ENCODE measurements at regions of chr3 and their contacts with region 1.

Region 1: DNA sequence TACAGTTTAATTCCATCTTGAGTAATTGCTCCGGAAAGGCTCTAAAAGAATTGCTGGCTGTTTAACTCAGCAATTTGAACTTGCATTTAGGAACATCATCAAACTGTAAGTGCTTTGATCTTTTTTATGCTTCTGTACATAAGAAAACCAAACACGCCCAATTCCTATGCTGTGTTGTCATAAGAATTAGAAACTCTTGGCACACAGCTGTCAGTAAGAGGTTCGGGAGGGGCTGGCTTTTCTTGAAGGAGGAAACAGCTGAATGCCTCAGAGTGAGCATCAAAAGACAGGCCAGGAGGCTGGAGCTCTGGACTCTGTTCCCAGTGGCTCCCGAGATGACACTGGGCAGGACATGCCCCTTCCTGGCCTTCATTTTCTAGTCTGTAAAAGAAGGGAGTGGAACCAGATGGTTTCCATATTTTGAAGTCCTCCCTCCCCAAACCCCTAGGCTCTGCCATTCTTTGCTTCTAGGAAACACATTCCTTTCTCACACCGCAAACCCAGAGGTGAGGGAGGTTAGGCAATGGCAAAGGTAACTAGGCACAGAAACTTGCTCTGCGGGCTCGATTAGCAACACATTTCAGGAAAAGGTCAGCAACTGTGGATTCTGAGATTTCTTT is 73.7 kb upstream of the DLG1 start:
- DNase-seq: peak; percentile 90 to 93
- H3K4me3 ChIP-seq: no peak overlapping the region
- H3K4me3 Mint-ChIP-seq: peak overlapping the region; percentile 7
- H3K27ac Mint-ChIP-seq: peak overlapping the region; percentile 90
- H3K4me1 ChIP-seq: peaks cover 57% of the 10 kb centered on the region
- H3K4me1 Mint-ChIP-seq: peaks cover 32% of the 10 kb centered on the region
- H3K27me3 ChIP-seq: no peaks in the 10 kb centered on the region
- H3K27me3 Mint-ChIP-seq: no peaks in the 10 kb centered on the region
- CTCF ChIP-seq: no peak

Region 2: DNA sequence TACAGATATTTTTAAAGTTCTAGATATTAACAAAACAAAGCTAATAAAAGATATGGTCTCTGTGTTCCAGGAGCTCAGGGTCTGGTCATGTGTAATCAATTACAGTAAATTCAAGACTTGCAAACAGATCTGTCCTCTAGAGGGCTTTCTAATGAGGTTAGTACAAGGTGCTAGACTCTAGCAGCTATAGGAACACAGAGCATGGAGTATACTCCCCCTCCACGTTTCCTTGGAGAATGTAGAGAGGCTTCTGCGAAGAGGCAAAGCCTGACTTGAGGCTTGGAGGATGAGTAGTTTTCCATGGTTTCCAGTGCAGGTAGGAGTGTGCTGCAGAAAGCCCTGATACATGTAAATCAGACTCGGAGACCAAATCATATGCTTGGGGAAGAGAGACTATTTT is 41.0 kb before region 1 on chr3:
- CTCF ChIA-PET with region 1: no interaction called
- POLR2A ChIA-PET with region 1: no interaction called
- intact Hi-C with region 1: loop called (anchors 5 kb)
- DNase-seq: no peak
- H3K4me3 ChIP-seq: no peak overlapping the region
- H3K4me3 Mint-ChIP-seq: no peak overlapping the region
- H3K27ac Mint-ChIP-seq: peak overlapping the region; percentile 5
- H3K4me1 ChIP-seq: peaks cover 23% of the 10 kb centered on the region
- H3K4me1 Mint-ChIP-seq: peaks cover 27% of the 10 kb centered on the region
- H3K27me3 ChIP-seq: no peaks in the 10 kb centered on the region
- H3K27me3 Mint-ChIP-seq: no peaks in the 10 kb centered on the region
- CTCF ChIP-seq: peak in 1 of 2 experiments; percentile 36

Region 3: DNA sequence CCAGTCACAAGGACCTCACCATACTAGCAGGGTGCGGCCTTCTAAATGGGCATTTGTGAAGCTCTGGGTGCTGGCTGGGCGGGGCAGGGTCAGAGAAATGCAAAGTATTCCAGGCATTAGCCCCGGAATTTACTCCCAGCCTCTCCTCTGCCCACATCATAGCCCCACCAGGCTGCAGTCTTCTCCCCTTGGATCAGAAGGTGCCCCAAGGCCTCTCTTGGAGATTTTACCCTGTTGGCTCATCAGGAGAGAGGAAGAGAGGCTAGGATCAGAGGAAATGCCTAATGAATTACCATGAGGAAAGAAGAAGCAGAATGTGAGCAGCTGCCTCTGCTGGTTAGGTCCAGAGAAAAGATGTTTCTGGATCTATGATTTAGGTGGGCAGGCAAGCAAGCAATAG is 117.9 kb after region 1 on chr3:
- CTCF ChIA-PET with region 1: no interaction called
- POLR2A ChIA-PET with region 1: no interaction called
- intact Hi-C with region 1: loop called (anchors 5 kb)
- DNase-seq: peak; percentile 80 to 93
- H3K4me3 ChIP-seq: no peak overlapping the region
- H3K4me3 Mint-ChIP-seq: peak overlapping the region; percentile 44
- H3K27ac Mint-ChIP-seq: peak overlapping the region; percentile 97
- H3K4me1 ChIP-seq: peaks cover 37% of the 10 kb centered on the region
- H3K4me1 Mint-ChIP-seq: peaks cover 21% of the 10 kb centered on the region
- H3K27me3 ChIP-seq: no peaks in the 10 kb centered on the region
- H3K27me3 Mint-ChIP-seq: no peaks in the 10 kb centered on the region
- CTCF ChIP-seq: no peak

Measured in Caco-2 (cell line).